ENCODE measurements at regions of chr11 and their contacts with region 1.

Region 1: DNA sequence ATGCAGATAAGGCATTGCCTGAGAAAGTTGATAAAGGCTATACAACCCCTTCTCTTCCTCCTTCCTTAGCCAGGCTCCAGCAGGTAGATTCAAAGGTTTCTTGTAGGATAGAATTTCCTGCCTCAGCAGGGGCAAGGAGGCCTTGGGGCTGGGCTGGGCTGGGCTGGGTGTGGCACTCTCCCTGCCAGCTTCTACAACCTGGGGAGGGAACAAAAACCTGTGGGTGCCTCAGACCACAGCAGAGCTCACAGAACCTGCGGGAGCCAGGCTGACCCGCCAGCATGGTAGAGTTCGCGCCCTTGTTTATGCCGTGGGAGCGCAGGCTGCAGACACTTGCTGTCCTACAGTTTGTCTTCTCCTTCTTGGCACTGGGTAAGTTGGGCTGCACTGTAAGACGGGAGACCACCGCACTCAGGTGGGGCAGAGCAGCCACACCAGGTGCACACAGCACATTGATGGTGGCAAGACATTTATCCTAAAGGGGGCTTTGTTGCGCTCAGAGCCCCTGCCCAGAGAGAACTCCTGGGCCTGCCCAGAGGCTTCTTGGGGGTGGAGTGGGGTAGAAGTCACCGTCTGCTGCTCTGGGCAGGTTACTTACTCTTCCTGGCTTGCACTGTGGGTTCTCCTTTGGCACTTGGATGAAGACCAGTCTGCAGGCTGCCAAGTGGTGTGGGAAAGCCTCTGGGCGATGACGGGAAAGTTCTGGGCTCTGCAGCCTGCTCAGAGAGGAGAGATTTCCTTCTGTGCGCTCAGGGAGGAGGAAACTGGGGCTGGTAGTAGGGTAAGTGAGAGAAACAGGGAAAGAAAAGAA is at the start of gene MOGAT2:
- DNase-seq: peak; percentile 82 to 86
- ATAC-seq: peak; percentile 70
- total RNA-seq, gene MOGAT2: 169 to 204 TPM

Region 2: DNA sequence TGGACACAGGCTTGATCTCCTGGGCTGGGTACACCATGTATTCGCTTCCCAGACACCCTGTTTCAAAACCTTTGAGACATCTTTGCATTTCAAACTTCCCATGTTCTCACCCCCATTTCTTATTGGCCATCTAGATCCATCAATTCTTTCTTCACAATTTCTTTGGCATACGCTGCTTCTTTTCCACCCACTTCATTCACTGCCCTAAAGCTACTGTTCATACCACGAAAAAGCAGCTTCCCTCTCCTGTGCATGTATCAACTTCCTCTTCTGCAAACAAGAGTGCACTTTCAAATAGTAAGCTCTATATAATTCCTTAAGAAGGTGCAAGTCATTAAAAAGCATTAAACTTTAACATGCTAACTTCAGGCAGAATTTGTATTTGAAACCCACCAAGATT is 118.6 kb after region 1 on chr11:
- intact Hi-C with region 1: no loop called
- DNase-seq: no peak
- ATAC-seq: no peak

Region 3: GRCh38 chr11:75867775-75868374 is 150.1 kb after region 1 on chr11:
- intact Hi-C with region 1: loop called in 1 of 2 experiments (anchors 10 kb)
- DNase-seq: peak in 1 of 2 donors; percentile 48
- ATAC-seq: peak; percentile 70

Region 4: GRCh38 chr11:75878933-75879332 is 161.1 kb after region 1 on chr11:
- intact Hi-C with region 1: no loop called
- DNase-seq: no peak
- ATAC-seq: no peak